A549 (cell line): ENCODE measurements at regions of chr9 and their contacts with region 1.

Region 1: DNA sequence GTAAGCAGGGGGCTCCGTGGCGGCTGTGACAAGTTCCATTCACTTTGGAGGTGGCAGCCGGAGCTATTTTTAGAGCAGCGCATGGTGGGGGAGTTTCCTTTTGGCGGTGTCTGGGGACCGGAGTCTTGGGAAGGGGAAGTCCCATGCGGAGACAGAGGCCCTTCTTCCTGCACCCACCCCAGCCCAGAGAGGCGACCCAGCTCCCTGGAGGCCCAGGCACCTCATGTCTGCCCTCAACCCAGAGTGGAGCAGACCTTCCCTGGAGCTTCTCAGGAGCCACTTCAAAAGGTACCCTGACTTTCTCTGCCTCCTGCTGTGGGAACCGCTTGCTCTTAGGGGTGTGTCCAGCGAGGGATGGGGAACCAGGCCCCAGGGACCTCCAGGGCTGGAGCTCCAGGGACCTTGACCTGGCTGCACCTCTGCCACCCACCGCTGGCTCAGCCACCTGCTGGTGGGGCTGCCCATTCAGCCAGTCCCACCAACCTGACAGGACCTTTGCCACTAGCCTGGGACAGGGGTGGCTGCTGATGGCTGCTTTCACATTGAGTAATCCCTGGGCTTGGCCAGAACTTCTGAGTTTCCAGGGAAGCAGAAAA is 34.1 kb downstream of the NEK6 start:
- DNase-seq: no peak
- ATAC-seq: peak in 1 of 2 experiments; percentile 19; a peak in 3 of 6 replicates
- H3K4me3 ChIP-seq: no peak overlapping the region
- H3K27ac ChIP-seq: peak overlapping the region; percentile 42 to 71; a peak in 5 of 6 replicates
- H3K4me1 ChIP-seq: peaks cover 74% of the 10 kb centered on the region
- CTCF ChIP-seq: no peak
- EP300 ChIP-seq: no peak
- POLR2A ChIP-seq: no peak
- RAD21 ChIP-seq: no peak

Region 2: GRCh38 chr9:124302921-124303320 is 11.0 kb after region 1 on chr9:
- CTCF ChIA-PET with region 1: interaction called, 11 read pairs
- POLR2A ChIA-PET with region 1: no interaction called
- DNase-seq: no peak
- ATAC-seq: no peak
- H3K4me3 ChIP-seq: no peak overlapping the region
- H3K27ac ChIP-seq: peak overlapping the region in 1 of 2 experiments; percentile 89; a peak in 3 of 6 replicates
- H3K4me1 ChIP-seq: peaks cover 57% of the 10 kb centered on the region
- CTCF ChIP-seq: no peak
- EP300 ChIP-seq: no peak
- POLR2A ChIP-seq: no peak
- RAD21 ChIP-seq: no peak